ENCODE measurements at regions of chr22 and their contacts with region 1.

Region 1: GRCh38 chr22:43385770-43386641 is 25.8 kb upstream of the MPPED1 start:
- DNase-seq: no peak
- H3K4me3 ChIP-seq: no peak overlapping the region
- H3K27ac ChIP-seq: no peak overlapping the region
- H3K4me1 ChIP-seq: peaks cover 5 to 15% (median 10%) of the 10 kb centered on the region in 4 donors
- H3K27me3 ChIP-seq: peaks cover 0 to 27% (median 0%) of the 10 kb centered on the region in 4 donors
- CTCF ChIP-seq: peak; percentile 88 to 98 (median 90)
- EP300 ChIP-seq: no peak
- POLR2A ChIP-seq: no peak

Region 2: GRCh38 chr22:43273902-43274484 is 112.0 kb before region 1 on chr22:
- intact Hi-C with region 1: loop called (anchors 2 kb)
- DNase-seq: no peak
- H3K4me3 ChIP-seq: no peak overlapping the region
- H3K27ac ChIP-seq: no peak overlapping the region
- H3K4me1 ChIP-seq: peaks cover 0 to 26% (median 6%) of the 10 kb centered on the region in 4 donors
- H3K27me3 ChIP-seq: peaks cover 0 to 20% (median 0%) of the 10 kb centered on the region in 4 donors
- CTCF ChIP-seq: peak; percentile 61 to 82 (median 80)
- EP300 ChIP-seq: no peak
- POLR2A ChIP-seq: no peak

Region 3: GRCh38 chr22:43826142-43827002 is 440.4 kb after region 1 on chr22:
- intact Hi-C with region 1: loop called (anchors 10 kb)
- DNase-seq: no peak
- H3K4me3 ChIP-seq: peak overlapping the region in 3 of 4 donors; percentile 6 to 19 (median 16)
- H3K27ac ChIP-seq: peak overlapping the region in 3 of 4 donors; percentile 24 to 51 (median 26)
- H3K4me1 ChIP-seq: peaks cover 17 to 40% (median 27%) of the 10 kb centered on the region in 4 donors
- H3K27me3 ChIP-seq: peaks cover 0 to 34% (median 0%) of the 10 kb centered on the region in 4 donors
- CTCF ChIP-seq: peak in 2 of 3 experiments; percentile 18 to 21
- EP300 ChIP-seq: no peak
- POLR2A ChIP-seq: no peak